ENCODE measurements at regions of chr6 and their contacts with region 1.

Region 1: DNA sequence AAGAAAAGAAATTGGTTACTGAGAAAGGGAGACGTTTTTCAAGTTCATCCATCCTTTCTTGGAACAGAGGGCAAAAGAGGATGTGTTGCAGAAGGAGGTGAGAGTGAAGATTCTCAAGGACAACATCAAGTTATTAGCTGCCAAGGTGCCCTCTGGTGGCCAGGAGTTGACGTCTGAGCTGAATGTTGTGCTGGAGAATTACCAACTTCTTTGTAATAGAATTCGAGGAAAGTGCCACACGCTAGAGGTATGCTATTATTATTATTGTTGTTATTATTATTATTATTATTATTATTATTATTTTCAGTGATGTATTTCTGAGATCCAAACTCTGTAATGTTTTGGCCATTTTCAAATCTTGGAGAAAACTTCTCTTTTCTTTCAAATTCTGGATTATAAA is 197.0 kb downstream of the UTRN start:
- DNase-seq: peak; percentile 81
- H3K4me3 ChIP-seq: no peak overlapping the region
- CTCF ChIP-seq: peak; percentile 73

Region 2: GRCh38 chr6:144104898-144105487 is 377.1 kb before region 1 on chr6:
- in situ Hi-C with region 1: loop called (anchors 25 kb)
- DNase-seq: peak; percentile 81
- H3K4me3 ChIP-seq: no peak overlapping the region
- CTCF ChIP-seq: peak; percentile 47

Region 3: GRCh38 chr6:144349690-144350527 is 132.2 kb before region 1 on chr6:
- in situ Hi-C with region 1: no loop called
- DNase-seq: peak; percentile 84
- H3K4me3 ChIP-seq: no peak overlapping the region
- CTCF ChIP-seq: no peak

Region 4: DNA sequence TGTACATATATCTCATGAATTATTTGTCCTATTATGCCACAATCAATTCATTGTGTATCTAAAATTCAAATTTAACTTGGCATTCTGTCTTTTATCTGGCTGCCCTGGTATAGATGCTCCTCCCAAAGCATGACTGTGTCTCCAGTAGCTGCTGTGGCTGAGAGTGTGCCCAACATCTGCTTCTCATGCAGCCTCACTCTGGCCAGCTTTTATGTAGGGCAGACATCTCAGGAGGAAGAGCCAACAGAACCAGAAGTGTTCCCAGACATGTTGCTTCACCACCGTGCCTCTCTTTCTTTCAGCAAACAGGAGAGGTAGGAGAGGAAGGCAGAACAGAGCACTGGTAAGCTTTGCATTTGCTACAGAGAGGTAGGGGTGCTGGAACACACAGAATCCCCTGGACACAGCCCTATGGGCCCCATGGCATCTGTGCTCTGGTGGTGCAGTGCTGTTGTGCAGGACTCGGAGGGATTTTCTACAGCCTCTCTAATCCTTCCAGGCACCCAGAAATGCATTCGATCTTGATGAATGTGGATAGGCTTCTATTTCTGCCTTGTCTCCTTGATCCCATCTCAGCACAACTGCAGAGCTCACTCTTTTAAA is 440.1 kb after region 1 on chr6:
- in situ Hi-C with region 1: no loop called
- DNase-seq: no peak
- H3K4me3 ChIP-seq: no peak overlapping the region
- CTCF ChIP-seq: no peak

Region 5: DNA sequence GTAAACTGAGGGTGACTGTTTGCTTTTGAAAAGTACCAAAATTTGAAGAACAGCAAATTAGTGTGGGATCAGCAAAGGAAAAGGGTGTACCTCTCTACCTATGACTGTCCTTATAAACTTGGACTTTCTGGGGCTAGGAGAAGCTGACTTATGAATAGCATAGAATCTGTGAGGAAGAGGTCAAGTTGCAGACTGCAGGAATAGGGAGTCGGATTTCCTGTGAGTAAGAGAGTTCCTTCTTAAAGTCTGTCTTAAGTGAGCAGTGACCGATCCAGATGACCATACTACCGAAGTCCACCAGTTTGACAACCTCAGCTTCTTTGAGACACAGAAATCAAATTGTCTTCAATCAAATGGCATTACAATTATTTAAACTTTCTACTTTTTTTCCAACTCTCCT is 511.7 kb after region 1 on chr6:
- in situ Hi-C with region 1: no loop called
- DNase-seq: peak; percentile 54
- H3K4me3 ChIP-seq: no peak overlapping the region
- CTCF ChIP-seq: no peak